Caco-2 (cell line): ENCODE measurements at regions of chr16 and their contacts with region 1.

Region 1: GRCh38 chr16:22369221-22369811 is 5.1 kb downstream of the CDR2 start:
- DNase-seq: no peak
- H3K4me3 ChIP-seq: no peak overlapping the region
- H3K4me3 Mint-ChIP-seq: peak overlapping the region; percentile 24
- H3K27ac Mint-ChIP-seq: no peak overlapping the region
- H3K4me1 ChIP-seq: peaks cover 62% of the 10 kb centered on the region
- H3K4me1 Mint-ChIP-seq: peaks cover 9% of the 10 kb centered on the region
- H3K27me3 ChIP-seq: no peaks in the 10 kb centered on the region
- H3K27me3 Mint-ChIP-seq: no peaks in the 10 kb centered on the region
- CTCF ChIP-seq: no peak

Region 2: DNA sequence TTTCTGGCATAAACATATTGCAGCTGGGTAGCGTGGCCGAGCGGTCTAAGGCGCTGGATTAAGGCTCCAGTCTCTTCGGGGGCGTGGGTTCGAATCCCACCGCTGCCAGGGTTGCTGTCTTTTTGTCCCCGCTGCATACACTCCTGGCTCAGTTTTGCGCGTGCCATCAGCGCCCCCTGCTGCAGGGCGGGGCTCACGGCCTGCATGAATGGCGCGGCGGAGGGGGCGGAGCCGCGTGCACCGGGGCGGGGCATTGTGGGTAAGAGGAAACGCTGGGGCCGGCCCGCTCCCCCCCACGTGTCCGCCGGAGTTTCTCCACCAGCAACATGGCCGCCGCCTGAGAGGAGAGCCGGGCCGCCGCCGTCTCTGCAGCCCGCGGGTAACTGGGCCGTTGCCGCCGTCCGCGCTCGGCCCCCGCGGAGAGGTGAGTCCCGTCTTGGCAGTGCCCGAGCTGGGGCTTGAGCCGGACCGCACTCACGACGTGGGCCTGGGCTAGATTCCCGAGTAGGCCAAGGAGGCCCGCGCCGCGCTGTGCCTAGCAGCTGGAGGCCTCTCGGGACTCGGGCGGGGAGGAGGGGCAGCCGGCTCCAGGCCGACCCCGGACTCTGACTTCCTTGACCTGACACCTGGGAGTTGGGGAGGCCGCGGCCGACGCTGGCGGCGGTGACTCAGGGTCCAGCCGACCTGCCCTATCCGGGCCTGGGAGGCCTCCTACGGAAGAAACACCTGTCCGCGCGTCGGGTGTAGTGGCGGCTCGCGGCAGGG is 72.0 kb before region 1 on chr16 and contains the start of gene POLR3E:
- CTCF ChIA-PET with region 1: no interaction called
- POLR2A ChIA-PET with region 1: no interaction called
- intact Hi-C with region 1: loop called (anchors 2 kb)
- DNase-seq: peak; percentile 96 to 99
- H3K4me3 ChIP-seq: peak within 1 kb of the TSS; percentile 77
- H3K4me3 Mint-ChIP-seq: peak within 1 kb of the TSS; percentile 82
- H3K27ac Mint-ChIP-seq: peak within 1 kb of the TSS; percentile 83
- H3K4me1 ChIP-seq: peaks cover 5% of the 10 kb centered on the region
- H3K4me1 Mint-ChIP-seq: peaks cover 13% of the 10 kb centered on the region
- H3K27me3 ChIP-seq: no peaks in the 10 kb centered on the region
- H3K27me3 Mint-ChIP-seq: no peaks in the 10 kb centered on the region
- CTCF ChIP-seq: peak; percentile 85 to 88
- total RNA-seq, gene POLR3E: 68.7 and 70.8 TPM in 2 replicates